ENCODE measurements at regions of chr1 and their contacts with region 1.

Region 1: GRCh38 chr1:18956369-18957135 is at the start of gene IFFO2:
- DNase-seq: peak; percentile 96 to 99 (median 97)
- H3K4me3 ChIP-seq: peak within 1 kb of the TSS in 1 of 2 donors; percentile 74
- H3K4me3 Mint-ChIP-seq: peak within 1 kb of the TSS; percentile 93 to 98 (median 94)
- H3K27ac ChIP-seq: peak within 1 kb of the TSS; percentile 98
- H3K27ac Mint-ChIP-seq: peak within 1 kb of the TSS; percentile 79 to 100 (median 99)
- H3K4me1 ChIP-seq: peaks cover 55% of the 10 kb centered on the region
- H3K4me1 Mint-ChIP-seq: peaks cover 31 to 66% (median 47%) of the 10 kb centered on the region in 4 donors
- H3K27me3 ChIP-seq: no peaks in the 10 kb centered on the region
- H3K27me3 Mint-ChIP-seq: no peaks in the 10 kb centered on the region
- total RNA-seq, gene IFFO2: 39.0 to 41.3 TPM

Region 2: DNA sequence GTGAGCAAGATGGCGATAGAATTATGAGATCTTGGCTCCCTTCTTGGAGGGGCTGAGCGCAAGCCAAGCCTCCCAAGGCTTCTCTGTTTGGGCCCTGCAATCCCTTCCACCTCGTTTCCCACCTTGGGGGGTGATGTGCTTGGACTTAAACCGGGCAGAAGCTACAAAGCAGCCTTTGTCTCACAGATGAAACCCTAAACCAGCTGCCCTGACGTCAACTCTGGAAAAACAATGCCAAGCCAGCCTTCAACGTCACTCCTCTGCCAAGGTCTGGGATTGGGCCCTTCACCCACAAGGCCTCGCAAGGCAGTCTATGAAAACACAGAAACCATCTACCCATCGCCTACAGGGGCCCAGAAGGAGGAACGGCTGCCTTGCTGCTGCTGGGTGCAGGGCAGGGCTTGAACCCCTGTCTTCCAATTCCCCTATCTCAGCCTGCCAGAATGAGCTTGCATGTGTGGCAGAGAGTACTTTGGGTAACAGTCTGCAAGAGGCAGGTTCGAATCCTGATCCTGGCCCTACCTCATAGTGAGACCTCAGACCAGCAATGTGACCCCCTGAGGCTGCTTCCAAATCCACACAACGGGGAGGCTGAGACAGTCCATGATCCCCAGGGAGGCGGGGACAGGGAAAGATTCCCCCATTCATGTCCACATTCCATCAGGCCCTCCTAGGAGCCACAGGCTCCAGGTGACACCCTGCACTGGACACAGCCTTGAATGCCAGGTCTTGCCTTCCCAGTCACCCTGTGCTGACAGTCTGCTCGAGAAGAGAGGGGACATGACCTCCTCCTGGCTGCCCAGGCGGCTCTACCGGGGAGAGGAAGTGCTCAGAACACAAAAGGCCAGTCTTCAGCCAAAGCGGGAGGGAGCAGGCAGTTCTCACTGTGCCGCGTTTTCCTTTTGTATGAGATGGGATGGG is 15.1 kb before region 1 on chr1:
- CTCF ChIA-PET with region 1: interaction called, 8 read pairs
- POLR2A ChIA-PET with region 1: interaction called, 34 read pairs
- intact Hi-C with region 1: no loop called
- DNase-seq: no peak
- H3K4me3 ChIP-seq: no peak overlapping the region
- H3K4me3 Mint-ChIP-seq: no peak overlapping the region
- H3K27ac ChIP-seq: peak overlapping the region; percentile 0
- H3K27ac Mint-ChIP-seq: peak overlapping the region; percentile 46 to 94 (median 70)
- H3K4me1 ChIP-seq: peaks cover 96% of the 10 kb centered on the region
- H3K4me1 Mint-ChIP-seq: peaks cover 49 to 93% (median 78%) of the 10 kb centered on the region in 4 donors
- H3K27me3 ChIP-seq: no peaks in the 10 kb centered on the region
- H3K27me3 Mint-ChIP-seq: no peaks in the 10 kb centered on the region

Region 3: DNA sequence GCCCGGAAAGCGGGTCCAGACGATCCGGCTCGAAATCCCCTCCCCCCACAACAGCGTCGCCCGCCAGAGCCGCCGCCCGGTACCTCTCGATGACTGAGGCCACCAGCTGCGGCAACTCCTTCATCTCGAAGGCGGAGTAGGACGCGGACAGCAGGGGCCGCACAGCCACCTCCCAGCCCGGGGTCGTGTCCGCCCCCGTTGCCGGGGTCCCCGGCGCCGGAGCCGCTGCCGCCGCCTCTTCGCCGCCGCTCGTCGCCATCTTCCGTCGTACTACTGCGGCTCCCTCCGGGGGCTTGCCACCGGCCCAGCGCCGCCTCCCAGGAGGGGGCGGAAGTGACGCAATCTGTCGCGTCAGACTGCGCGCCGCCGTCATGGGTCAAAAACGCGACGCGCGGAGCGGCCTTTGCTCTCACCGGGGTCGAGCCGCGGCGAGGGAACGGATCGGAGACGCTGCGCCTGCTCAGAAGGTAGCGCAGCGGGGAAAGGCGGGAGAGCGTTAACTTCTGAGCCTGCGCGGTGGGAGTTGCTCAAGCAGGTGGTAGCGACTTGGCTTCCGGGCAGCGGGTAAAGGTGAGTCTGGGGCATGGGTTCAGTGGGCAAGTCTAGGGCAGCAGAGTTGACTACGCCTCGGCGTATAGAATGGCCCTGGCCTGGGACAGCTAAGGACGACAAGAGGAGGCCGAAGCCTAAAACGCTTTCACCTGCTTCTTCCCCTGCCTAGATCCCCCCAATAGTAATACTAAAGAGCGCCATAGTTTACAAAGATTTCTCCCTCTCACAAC is 253.6 kb after region 1 on chr1 and contains the start of gene UBR4:
- CTCF ChIA-PET with region 1: no interaction called
- POLR2A ChIA-PET with region 1: no interaction called
- intact Hi-C with region 1: loop called (anchors 5 kb)
- DNase-seq: peak; percentile 95 to 96 (median 96)
- H3K4me3 ChIP-seq: peak within 1 kb of the TSS; percentile 81 to 82
- H3K4me3 Mint-ChIP-seq: peak within 1 kb of the TSS; percentile 93 to 99 (median 96)
- H3K27ac ChIP-seq: peak within 1 kb of the TSS; percentile 95
- H3K27ac Mint-ChIP-seq: peak within 1 kb of the TSS; percentile 98 to 99 (median 99)
- H3K4me1 ChIP-seq: peaks cover 73% of the 10 kb centered on the region
- H3K4me1 Mint-ChIP-seq: peaks cover 46 to 84% (median 66%) of the 10 kb centered on the region in 4 donors
- H3K27me3 ChIP-seq: no peaks in the 10 kb centered on the region
- H3K27me3 Mint-ChIP-seq: no peaks in the 10 kb centered on the region
- total RNA-seq, gene UBR4: 152 to 154 TPM

Measured in CD4-positive, alpha-beta memory T cell (primary cell).